T-cell (primary cell): ENCODE measurements at regions of chr3 and their contacts with region 1.

Region 1: GRCh38 chr3:157159762-157160657 is at the start of gene CCNL1:
- DNase-seq: peak; percentile 90 to 99 (median 95)
- ATAC-seq: peak; percentile 76 to 83 (median 82)
- H3K4me3 ChIP-seq: peak within 1 kb of the TSS; percentile 95 to 99
- H3K4me3 Mint-ChIP-seq: peak within 1 kb of the TSS; percentile 87 to 99 (median 93)
- H3K27ac ChIP-seq: peak within 1 kb of the TSS; percentile 98
- H3K27ac Mint-ChIP-seq: peak within 1 kb of the TSS; percentile 99 to 100
- H3K4me1 ChIP-seq: peaks cover 21 to 47% of the 10 kb centered on the region in 2 experiments
- H3K4me1 Mint-ChIP-seq: peaks cover 50 to 55% (median 54%) of the 10 kb centered on the region in 3 donors
- H3K27me3 ChIP-seq: no peaks in the 10 kb centered on the region
- H3K27me3 Mint-ChIP-seq: no peaks in the 10 kb centered on the region
- total RNA-seq, gene CCNL1: 271 to 1,140 (median 276) TPM

Region 2: GRCh38 chr3:157174649-157175498 is 14.9 kb after region 1 on chr3:
- CTCF ChIA-PET with region 1: interaction called, 4 to 38 read pairs
- POLR2A ChIA-PET with region 1: interaction called, 68 to 177 read pairs
- DNase-seq: peak; percentile 90 to 99 (median 98)
- ATAC-seq: peak; percentile 93 to 96 (median 94)
- H3K4me3 ChIP-seq: peak overlapping the region; percentile 78 to 88
- H3K4me3 Mint-ChIP-seq: peak overlapping the region; percentile 90 to 95 (median 94)
- H3K27ac ChIP-seq: peak overlapping the region; percentile 99
- H3K27ac Mint-ChIP-seq: peak overlapping the region; percentile 96 to 100
- H3K4me1 ChIP-seq: peaks cover 5 to 24% of the 10 kb centered on the region in 2 experiments
- H3K4me1 Mint-ChIP-seq: peaks cover 30 to 33% (median 32%) of the 10 kb centered on the region in 3 donors
- H3K27me3 ChIP-seq: no peaks in the 10 kb centered on the region
- H3K27me3 Mint-ChIP-seq: peaks cover 0 to 4% of the 10 kb centered on the region in 2 donors